ENCODE measurements at regions of chr5 and their contacts with region 1.

Region 1: GRCh38 chr5:167030500-167031120 is 1260.8 kb upstream of the WWC1 start:
- DNase-seq: no peak
- H3K4me3 ChIP-seq: no peak overlapping the region
- H3K27ac ChIP-seq: no peak overlapping the region
- H3K4me1 ChIP-seq: no peaks in the 10 kb centered on the region
- H3K27me3 ChIP-seq: no peaks in the 10 kb centered on the region
- CTCF ChIP-seq: no peak

Region 2: GRCh38 chr5:167052791-167053190 is 22.2 kb after region 1 on chr5:
- intact Hi-C with region 1: loop called (anchors 2 kb)
- DNase-seq: no peak
- H3K4me3 ChIP-seq: no peak overlapping the region
- H3K27ac ChIP-seq: no peak overlapping the region
- H3K4me1 ChIP-seq: no peaks in the 10 kb centered on the region
- H3K27me3 ChIP-seq: no peaks in the 10 kb centered on the region
- CTCF ChIP-seq: no peak

Measured in ascending aorta (tissue), 2 donors.